Lower leg skin (tissue), 4 donors: ENCODE measurements at regions of chr1 and their contacts with region 1.

Region 1: GRCh38 chr1:186985889-186986491 is 157.2 kb downstream of the PLA2G4A start:
- DNase-seq: no peak
- H3K4me3 ChIP-seq: no peak overlapping the region
- CTCF ChIP-seq: no peak
- POLR2A ChIP-seq: no peak

Region 2: GRCh38 chr1:186487163-186487562 is 498.8 kb before region 1 on chr1:
- intact Hi-C with region 1: loop called (anchors 5 kb)
- DNase-seq: no peak
- H3K4me3 ChIP-seq: no peak overlapping the region
- CTCF ChIP-seq: no peak
- POLR2A ChIP-seq: no peak

Region 3: GRCh38 chr1:186605762-186606350 is 380.1 kb before region 1 on chr1:
- intact Hi-C with region 1: loop called (anchors 10 kb)
- DNase-seq: no peak
- H3K4me3 ChIP-seq: no peak overlapping the region
- CTCF ChIP-seq: no peak
- POLR2A ChIP-seq: no peak

Region 4: DNA sequence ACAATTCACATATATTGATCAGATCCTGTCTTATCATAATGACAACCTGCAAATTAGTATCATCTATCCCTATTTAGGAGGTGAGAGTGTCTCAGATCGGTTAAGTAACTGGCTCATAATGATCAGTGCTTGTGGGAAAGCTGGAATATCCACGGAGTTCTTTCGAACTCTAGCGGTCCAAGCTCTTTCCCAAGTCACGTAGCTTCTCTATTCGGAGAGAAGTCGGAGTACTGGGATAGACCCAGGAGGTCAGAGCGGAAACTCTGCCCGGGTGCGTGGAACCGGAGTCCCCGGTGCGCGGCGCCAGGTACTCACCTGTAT is 306.1 kb before region 1 on chr1:
- intact Hi-C with region 1: loop called (anchors 10 kb)
- DNase-seq: no peak
- H3K4me3 ChIP-seq: peak overlapping the region; percentile 66
- CTCF ChIP-seq: no peak
- POLR2A ChIP-seq: no peak